HepG2 (cell line): ENCODE measurements at regions of chr9 and their contacts with region 1.

Region 1: GRCh38 chr9:121686930-121687541 is 35.6 kb downstream of the DAB2IP start:
- DNase-seq: peak; percentile 63
- ATAC-seq: peak; percentile 87
- H3K4me3 ChIP-seq: no peak overlapping the region
- H3K27ac ChIP-seq: no peak overlapping the region
- H3K4me1 ChIP-seq: peaks cover 36% of the 10 kb centered on the region
- H3K27me3 ChIP-seq: no peaks in the 10 kb centered on the region
- CTCF ChIP-seq: peak; percentile 96
- EP300 ChIP-seq: no peak
- POLR2A ChIP-seq: no peak
- RAD21 ChIP-seq: peak; percentile 75

Region 2: DNA sequence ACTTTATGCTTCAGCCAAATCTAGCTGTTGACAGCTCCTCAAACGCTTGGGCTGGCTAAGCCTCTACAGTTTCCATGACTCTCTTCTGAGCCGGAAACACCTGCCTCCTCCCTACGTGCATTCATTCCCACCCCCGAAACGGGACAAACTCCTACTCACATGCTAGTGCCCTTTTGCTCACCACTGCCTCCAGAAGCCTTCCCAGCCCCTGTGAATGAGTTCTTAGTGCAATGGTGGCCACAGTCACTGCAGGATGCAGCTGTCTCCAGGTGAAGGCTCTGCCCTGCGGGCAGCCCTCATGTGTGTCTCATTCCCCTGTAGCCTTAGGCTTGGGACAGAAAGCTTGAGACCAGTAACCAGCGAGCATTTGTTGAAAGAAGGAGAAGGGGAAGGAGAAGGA is 104.4 kb before region 1 on chr9:
- CTCF ChIA-PET with region 1: no interaction called
- POLR2A ChIA-PET with region 1: no interaction called
- in situ Hi-C with region 1: no loop called
- intact Hi-C with region 1: no loop called
- DNase-seq: no peak
- ATAC-seq: peak; percentile 60
- H3K4me3 ChIP-seq: peak overlapping the region in 2 of 3 experiments; percentile 22 to 67; a peak in 3 of 6 replicates
- H3K27ac ChIP-seq: no peak overlapping the region
- H3K4me1 ChIP-seq: peaks cover 26% of the 10 kb centered on the region
- H3K27me3 ChIP-seq: peaks cover 0 to 55% of the 10 kb centered on the region in 2 experiments; a peak in 4 of 5 replicates
- CTCF ChIP-seq: no peak
- EP300 ChIP-seq: no peak
- POLR2A ChIP-seq: no peak
- RAD21 ChIP-seq: no peak

Region 3: DNA sequence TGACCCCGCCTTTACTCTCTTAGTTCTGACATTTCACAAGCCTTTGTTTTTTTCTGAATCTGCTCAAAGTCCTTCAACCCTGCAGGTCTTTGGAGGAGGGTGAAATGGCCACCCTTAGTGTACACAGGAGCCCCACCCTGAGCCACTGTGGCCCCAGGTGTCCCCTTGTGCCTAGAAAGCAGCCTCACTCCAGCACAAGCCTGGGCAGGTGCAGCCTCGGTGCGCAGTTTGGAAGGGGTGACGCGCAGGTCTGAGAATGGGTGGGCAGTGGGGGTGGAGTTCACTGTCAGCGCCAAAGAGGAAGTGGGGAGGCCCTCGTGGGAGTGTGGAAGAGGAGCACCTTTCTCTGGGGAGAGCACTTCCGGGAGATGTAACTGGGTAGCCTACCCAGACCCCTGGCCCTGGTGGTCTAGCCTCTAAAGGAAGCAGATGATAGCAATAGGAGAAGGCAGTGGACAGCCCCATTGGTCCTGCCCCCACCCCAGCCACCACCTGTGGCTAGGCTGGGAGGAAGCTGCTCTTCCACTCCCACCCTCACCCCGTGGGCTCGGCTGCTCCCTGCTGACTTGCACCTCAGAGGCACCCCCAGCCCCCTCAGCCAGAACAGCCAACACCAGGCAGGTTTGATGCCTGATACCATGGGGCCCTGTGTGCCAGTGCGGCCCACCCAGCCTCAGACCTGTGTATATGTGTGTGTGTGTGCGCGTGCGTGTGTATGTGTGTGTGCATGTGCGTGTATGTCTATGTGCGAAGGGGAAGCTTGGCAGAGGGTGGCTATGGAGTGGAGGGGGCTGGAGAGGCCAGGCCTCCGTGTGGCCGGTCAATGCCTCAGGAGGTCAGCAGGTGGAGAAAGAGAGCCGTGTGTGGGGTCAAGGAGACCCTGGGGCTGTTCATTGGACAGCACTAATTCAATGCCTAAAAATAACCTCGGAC is 52.4 kb before region 1 on chr9:
- CTCF ChIA-PET with region 1: interaction called, 11 read pairs
- POLR2A ChIA-PET with region 1: no interaction called
- in situ Hi-C with region 1: no loop called
- intact Hi-C with region 1: loop called (anchors 1 kb)
- DNase-seq: peak; percentile 57
- ATAC-seq: peak; percentile 79
- H3K4me3 ChIP-seq: peak overlapping the region; percentile 23 to 63 (median 30); a peak in 4 of 6 replicates
- H3K27ac ChIP-seq: no peak overlapping the region
- H3K4me1 ChIP-seq: peaks cover 52% of the 10 kb centered on the region
- H3K27me3 ChIP-seq: no peaks in the 10 kb centered on the region
- CTCF ChIP-seq: peak; percentile 91
- EP300 ChIP-seq: peak in 1 of 2 experiments; percentile 24; a peak in 1 of 4 replicates
- POLR2A ChIP-seq: no peak
- RAD21 ChIP-seq: peak; percentile 77